PC-3 (cell line): ENCODE measurements at regions of chr14 and their contacts with region 1.

Region 1: GRCh38 chr14:30980980-30981379 is 44.5 kb upstream of the AP4S1 start:
- DNase-seq: no peak
- ATAC-seq: 0 out of 2 replicates have a peak, but pooled peaks have one; percentile 13
- H3K4me3 ChIP-seq: no peak overlapping the region
- H3K27ac ChIP-seq: no peak overlapping the region
- H3K4me1 ChIP-seq: no peaks in the 10 kb centered on the region
- H3K27me3 ChIP-seq: no peaks in the 10 kb centered on the region
- CTCF ChIP-seq: no peak

Region 2: GRCh38 chr14:30064454-30064853 is 916.5 kb before region 1 on chr14:
- CTCF ChIA-PET with region 1: no interaction called
- POLR2A ChIA-PET with region 1: no interaction called
- intact Hi-C with region 1: no loop called
- DNase-seq: no peak
- ATAC-seq: no peak
- H3K4me3 ChIP-seq: no peak overlapping the region
- H3K27ac ChIP-seq: no peak overlapping the region
- H3K4me1 ChIP-seq: no peaks in the 10 kb centered on the region
- H3K27me3 ChIP-seq: 0 out of 2 replicates have a peak, but pooled peaks cover 7% of the 10 kb centered on the region
- CTCF ChIP-seq: no peak

Region 3: GRCh38 chr14:31084385-31084784 is 103.4 kb after region 1 on chr14:
- CTCF ChIA-PET with region 1: no interaction called
- POLR2A ChIA-PET with region 1: no interaction called
- intact Hi-C with region 1: loop called (anchors 1 kb)
- DNase-seq: no peak
- ATAC-seq: no peak
- H3K4me3 ChIP-seq: no peak overlapping the region
- H3K27ac ChIP-seq: no peak overlapping the region
- H3K4me1 ChIP-seq: peaks cover 13% of the 10 kb centered on the region
- H3K27me3 ChIP-seq: no peaks in the 10 kb centered on the region
- CTCF ChIP-seq: 0 out of 2 replicates have a peak, but pooled peaks have one; percentile 22

Region 4: GRCh38 chr14:31360919-31361662 is 380.1 kb after region 1 on chr14:
- CTCF ChIA-PET with region 1: no interaction called
- POLR2A ChIA-PET with region 1: no interaction called
- intact Hi-C with region 1: loop called (anchors 2 kb)
- DNase-seq: peak; percentile 75
- ATAC-seq: peak; percentile 82
- H3K4me3 ChIP-seq: no peak overlapping the region
- H3K27ac ChIP-seq: peak overlapping the region; percentile 15
- H3K4me1 ChIP-seq: peaks cover 29% of the 10 kb centered on the region
- H3K27me3 ChIP-seq: no peaks in the 10 kb centered on the region
- CTCF ChIP-seq: no peak